ENCODE measurements at regions of chr10 and their contacts with region 1.

Region 1: GRCh38 chr10:121608469-121609190 is 10.4 kb upstream of the FGFR2 start:
- DNase-seq: peak; percentile 85
- ATAC-seq: peak; percentile 95
- H3K4me3 ChIP-seq: peak overlapping the region; percentile 35
- H3K27ac ChIP-seq: peak overlapping the region; percentile 55
- H3K4me1 ChIP-seq: no peaks in the 10 kb centered on the region
- H3K27me3 ChIP-seq: peaks cover 7% of the 10 kb centered on the region
- CTCF ChIP-seq: peak; percentile 84

Region 2: DNA sequence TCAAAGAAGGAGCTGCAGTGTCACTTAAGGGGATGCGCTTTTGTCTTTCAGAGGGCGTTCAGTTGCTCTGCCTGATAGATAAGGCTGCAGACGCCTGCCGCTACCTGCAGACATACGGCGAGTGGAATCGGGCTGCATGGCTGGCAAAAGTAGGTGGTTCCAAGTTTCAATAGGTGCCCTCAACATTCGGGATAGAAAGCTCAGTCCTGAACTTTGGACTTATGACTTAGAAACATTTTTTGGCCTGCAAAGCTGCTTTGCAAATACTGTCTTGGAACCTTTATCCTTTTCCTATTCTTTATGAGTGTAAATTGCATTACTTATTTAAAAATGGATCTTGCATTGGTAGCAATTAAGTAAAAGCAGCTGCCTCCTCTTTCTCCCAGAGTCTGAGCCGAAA is 703.4 kb before region 1 on chr10:
- intact Hi-C with region 1: no loop called
- DNase-seq: no peak
- ATAC-seq: no peak
- H3K4me3 ChIP-seq: no peak overlapping the region
- H3K27ac ChIP-seq: no peak overlapping the region
- H3K4me1 ChIP-seq: no peaks in the 10 kb centered on the region
- H3K27me3 ChIP-seq: no peaks in the 10 kb centered on the region
- CTCF ChIP-seq: no peak

Region 3: GRCh38 chr10:120942806-120943413 is 665.7 kb before region 1 on chr10:
- intact Hi-C with region 1: loop called (anchors 10 kb)
- DNase-seq: peak; percentile 90
- ATAC-seq: peak; percentile 94
- H3K4me3 ChIP-seq: no peak overlapping the region
- H3K27ac ChIP-seq: no peak overlapping the region
- H3K4me1 ChIP-seq: peaks cover 8% of the 10 kb centered on the region
- H3K27me3 ChIP-seq: peaks cover 5% of the 10 kb centered on the region
- CTCF ChIP-seq: peak; percentile 86

Region 4: DNA sequence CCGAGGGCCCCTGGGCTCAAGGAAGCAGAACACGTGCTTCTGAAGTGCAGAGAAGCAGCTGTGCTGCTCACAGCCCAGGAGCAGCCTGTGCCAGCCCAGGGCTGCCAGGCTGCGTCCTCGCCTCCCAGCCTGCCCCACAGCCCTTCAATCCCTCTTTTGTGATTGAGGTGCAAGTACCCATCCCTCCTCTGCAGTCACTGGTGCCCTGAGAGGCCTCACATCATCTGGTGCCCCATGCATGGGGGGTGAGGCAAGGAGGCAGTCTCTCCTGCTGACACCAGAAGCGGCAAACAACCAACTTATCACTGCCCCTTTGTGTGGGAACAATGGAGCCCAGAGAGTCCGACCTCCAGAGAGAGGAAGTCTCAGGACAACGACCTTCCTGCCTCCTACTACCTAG is 39.4 kb after region 1 on chr10:
- intact Hi-C with region 1: no loop called
- DNase-seq: peak; percentile 40
- ATAC-seq: peak; percentile 8
- H3K4me3 ChIP-seq: no peak overlapping the region
- H3K27ac ChIP-seq: no peak overlapping the region
- H3K4me1 ChIP-seq: no peaks in the 10 kb centered on the region
- H3K27me3 ChIP-seq: no peaks in the 10 kb centered on the region
- CTCF ChIP-seq: no peak

Measured in upper lobe of right lung (tissue), 1 donor.